HepG2 (cell line): ENCODE measurements at regions of chr2 and their contacts with region 1.

Region 1: GRCh38 chr2:8821276-8822217 is 15.9 kb downstream of the KIDINS220 start:
- DNase-seq: peak; percentile 79
- ATAC-seq: peak; percentile 98
- H3K4me3 ChIP-seq: no peak overlapping the region
- H3K27ac ChIP-seq: peak overlapping the region; percentile 4
- H3K4me1 ChIP-seq: peaks cover 31% of the 10 kb centered on the region
- H3K27me3 ChIP-seq: no peaks in the 10 kb centered on the region
- CTCF ChIP-seq: no peak
- EP300 ChIP-seq: peak in 1 of 2 experiments; percentile 27; a peak in 1 of 4 replicates
- POLR2A ChIP-seq: no peak
- RAD21 ChIP-seq: no peak

Region 2: GRCh38 chr2:8761529-8762164 is 59.9 kb before region 1 on chr2:
- CTCF ChIA-PET with region 1: no interaction called
- POLR2A ChIA-PET with region 1: no interaction called
- in situ Hi-C with region 1: no loop called
- intact Hi-C with region 1: no loop called
- DNase-seq: peak; percentile 36
- ATAC-seq: peak; percentile 37; the same call in 1 of the 3 replicates
- H3K4me3 ChIP-seq: no peak overlapping the region
- H3K27ac ChIP-seq: no peak overlapping the region
- H3K4me1 ChIP-seq: no peaks in the 10 kb centered on the region
- H3K27me3 ChIP-seq: no peaks in the 10 kb centered on the region
- CTCF ChIP-seq: peak; percentile 60
- EP300 ChIP-seq: no peak
- POLR2A ChIP-seq: no peak
- RAD21 ChIP-seq: peak; percentile 58

Region 3: DNA sequence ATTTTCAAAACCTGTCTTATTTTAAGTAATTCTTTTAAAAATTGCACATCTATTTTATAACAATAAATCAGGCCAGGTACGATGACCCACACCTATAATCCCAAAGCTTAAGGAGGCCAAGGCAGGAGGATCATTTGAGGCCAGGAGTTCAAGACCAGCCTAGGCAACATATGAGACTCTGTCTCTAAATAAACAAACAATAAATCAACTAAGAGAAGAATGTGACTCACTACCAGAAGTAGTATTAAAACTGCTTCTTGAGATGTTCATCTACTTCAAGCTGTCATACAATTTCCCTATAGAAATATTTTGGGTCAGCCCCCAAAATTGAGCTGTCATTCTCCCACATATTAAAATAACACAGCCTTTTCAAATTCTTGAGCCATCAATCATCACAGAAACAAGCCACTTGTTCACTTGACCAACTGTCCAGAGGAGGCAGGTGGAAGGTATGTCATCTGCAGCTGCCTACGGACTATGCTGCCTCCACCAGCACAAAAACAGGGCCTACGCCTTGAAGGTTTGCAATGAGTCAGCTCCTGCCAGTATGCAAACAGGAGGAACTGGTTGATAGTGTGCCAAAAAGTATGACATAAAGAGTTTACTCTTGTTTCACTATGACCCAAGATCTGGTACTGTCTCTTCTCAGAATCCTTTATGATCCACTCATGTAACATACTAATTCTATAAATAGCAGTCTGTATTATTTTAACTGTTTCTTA is 17.7 kb before region 1 on chr2:
- CTCF ChIA-PET with region 1: no interaction called
- POLR2A ChIA-PET with region 1: no interaction called
- in situ Hi-C with region 1: no loop called
- intact Hi-C with region 1: loop called (anchors 1 kb)
- DNase-seq: peak; percentile 88
- ATAC-seq: peak; percentile 95
- H3K4me3 ChIP-seq: no peak overlapping the region
- H3K27ac ChIP-seq: no peak overlapping the region
- H3K4me1 ChIP-seq: peaks cover 5% of the 10 kb centered on the region; the same call in 1 of the 2 replicates
- H3K27me3 ChIP-seq: no peaks in the 10 kb centered on the region
- CTCF ChIP-seq: peak; percentile 20; the same call in 1 of the 2 replicates
- EP300 ChIP-seq: peak in 1 of 2 experiments; percentile 35; a peak in 1 of 4 replicates
- POLR2A ChIP-seq: no peak
- RAD21 ChIP-seq: no peak

Region 4: GRCh38 chr2:8836971-8837794 is 15.6 kb after region 1 on chr2 and contains the start of gene KIDINS220:
- CTCF ChIA-PET with region 1: no interaction called
- POLR2A ChIA-PET with region 1: interaction called, 5 read pairs
- in situ Hi-C with region 1: no loop called
- intact Hi-C with region 1: loop called (anchors 1 kb)
- DNase-seq: peak; percentile 75
- ATAC-seq: peak; percentile 83
- H3K4me3 ChIP-seq: peak within 1 kb of the TSS; percentile 92 to 98 (median 98)
- H3K27ac ChIP-seq: peak within 1 kb of the TSS; percentile 41
- H3K4me1 ChIP-seq: peaks cover 70% of the 10 kb centered on the region
- H3K27me3 ChIP-seq: no peaks in the 10 kb centered on the region; a peak in 1 of 5 replicates
- CTCF ChIP-seq: 0 out of 2 replicates have a peak, but pooled peaks have one; percentile 19
- EP300 ChIP-seq: peak in 1 of 2 experiments; percentile 20; a peak in 1 of 4 replicates
- POLR2A ChIP-seq: peak; percentile 85 to 95
- RAD21 ChIP-seq: peak; percentile 45; the same call in 1 of the 2 replicates
- total RNA-seq, gene KIDINS220: 22.4 and 32.3 TPM in 2 replicates